GM12878 (cell line): ENCODE measurements at regions of chr10 and their contacts with region 1.

Region 1: GRCh38 chr10:28334296-28334695 is 31.4 kb upstream of the MPP7 start:
- DNase-seq: peak; percentile 63
- ATAC-seq: peak; percentile 87
- H3K4me3 ChIP-seq: no peak overlapping the region
- H3K27ac ChIP-seq: peak overlapping the region; percentile 34; the same call in 1 of the 2 replicates
- H3K4me1 ChIP-seq: peaks cover 8% of the 10 kb centered on the region; the same call in 1 of the 2 replicates
- H3K27me3 ChIP-seq: no peaks in the 10 kb centered on the region
- CTCF ChIP-seq: no peak
- EP300 ChIP-seq: peak; percentile 38 to 83; a peak in 3 of 4 replicates
- POLR2A ChIP-seq: no peak
- RAD21 ChIP-seq: no peak

Region 2: GRCh38 chr10:27637362-27637964 is 696.8 kb before region 1 on chr10:
- CTCF ChIA-PET with region 1: no interaction called
- POLR2A ChIA-PET with region 1: no interaction called
- RAD21 ChIA-PET with region 1: no interaction called
- SMC1A ChIA-PET with region 1: no interaction called
- in situ Hi-C with region 1: no loop called
- intact Hi-C with region 1: no loop called
- DNase-seq: no peak
- ATAC-seq: no peak
- H3K4me3 ChIP-seq: no peak overlapping the region
- H3K27ac ChIP-seq: no peak overlapping the region
- H3K4me1 ChIP-seq: no peaks in the 10 kb centered on the region
- H3K27me3 ChIP-seq: no peaks in the 10 kb centered on the region
- CTCF ChIP-seq: no peak
- EP300 ChIP-seq: no peak
- POLR2A ChIP-seq: no peak
- RAD21 ChIP-seq: no peak

Region 3: GRCh38 chr10:28367929-28368484 is 33.7 kb after region 1 on chr10:
- CTCF ChIA-PET with region 1: interaction called, 4 read pairs
- POLR2A ChIA-PET with region 1: interaction called, 4 read pairs
- RAD21 ChIA-PET with region 1: interaction called, 7 read pairs
- SMC1A ChIA-PET with region 1: interaction called, 20 read pairs
- in situ Hi-C with region 1: no loop called
- intact Hi-C with region 1: loop called (anchors 1 kb)
- DNase-seq: peak; percentile 68
- ATAC-seq: peak; percentile 99
- H3K4me3 ChIP-seq: no peak overlapping the region
- H3K27ac ChIP-seq: no peak overlapping the region
- H3K4me1 ChIP-seq: peaks cover 7% of the 10 kb centered on the region
- H3K27me3 ChIP-seq: no peaks in the 10 kb centered on the region
- CTCF ChIP-seq: no peak
- EP300 ChIP-seq: no peak
- POLR2A ChIP-seq: no peak
- RAD21 ChIP-seq: 0 out of 2 replicates have a peak, but pooled peaks have one; percentile 1